Mammary epithelial cell (primary cell): ENCODE measurements at regions of chr17 and their contacts with region 1.

Region 1: GRCh38 chr17:41071606-41072360 is 6.1 kb upstream of the KRTAP2-4 start:
- DNase-seq: no peak
- H3K4me3 ChIP-seq: no peak overlapping the region
- H3K27ac ChIP-seq: no peak overlapping the region
- H3K4me1 ChIP-seq: peaks cover 5% of the 10 kb centered on the region
- H3K27me3 ChIP-seq: no peaks in the 10 kb centered on the region
- CTCF ChIP-seq: no peak

Region 2: DNA sequence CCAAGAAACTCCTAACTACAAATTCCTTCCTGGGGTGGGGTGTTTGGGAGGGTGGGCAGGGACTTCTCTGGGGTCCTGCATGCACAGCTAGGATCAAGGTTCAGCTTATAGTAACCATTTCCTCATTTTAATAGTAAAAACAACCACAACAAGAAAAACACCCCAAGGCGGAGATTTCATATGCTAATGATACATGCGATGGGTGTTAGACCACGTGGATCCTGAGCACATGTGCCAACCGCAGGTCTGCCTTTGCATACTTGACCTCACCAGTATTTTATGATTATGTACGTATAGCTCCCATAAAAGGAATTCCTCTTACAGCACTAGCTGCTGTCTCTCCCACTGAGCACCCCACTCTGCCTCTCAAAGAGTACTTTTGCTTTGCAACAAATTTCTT is 44.5 kb after region 1 on chr17:
- CTCF ChIA-PET with region 1: no interaction called
- dilution Hi-C with region 1: no loop called
- in situ Hi-C with region 1: no loop called
- intact Hi-C with region 1: no loop called
- DNase-seq: no peak
- H3K4me3 ChIP-seq: no peak overlapping the region
- H3K27ac ChIP-seq: no peak overlapping the region
- H3K4me1 ChIP-seq: peaks cover 3% of the 10 kb centered on the region
- H3K27me3 ChIP-seq: no peaks in the 10 kb centered on the region
- CTCF ChIP-seq: no peak

Region 3: GRCh38 chr17:41211845-41212466 is 140.2 kb after region 1 on chr17:
- CTCF ChIA-PET with region 1: no interaction called
- dilution Hi-C with region 1: loop called (anchors 10 kb)
- in situ Hi-C with region 1: no loop called
- intact Hi-C with region 1: no loop called
- DNase-seq: peak; percentile 71
- H3K4me3 ChIP-seq: no peak overlapping the region
- H3K27ac ChIP-seq: no peak overlapping the region
- H3K4me1 ChIP-seq: peaks cover 4% of the 10 kb centered on the region
- H3K27me3 ChIP-seq: peaks cover 2% of the 10 kb centered on the region
- CTCF ChIP-seq: no peak